ENCODE measurements at regions of chr2 and their contacts with region 1.

Region 1: GRCh38 chr2:177164584-177165052 is 48.0 kb upstream of the HNRNPA3 start:
- DNase-seq: peak; percentile 89
- H3K4me3 ChIP-seq: peak overlapping the region; percentile 11 to 41 (median 31)
- H3K27ac ChIP-seq: peak overlapping the region; percentile 83 to 90 (median 87)
- H3K4me1 ChIP-seq: peaks cover 0 to 40% (median 20%) of the 10 kb centered on the region in 4 donors
- H3K27me3 ChIP-seq: no peaks in the 10 kb centered on the region
- CTCF ChIP-seq: peak; percentile 100
- EP300 ChIP-seq: no peak
- POLR2A ChIP-seq: no peak

Region 2: GRCh38 chr2:177263451-177264208 is 99.0 kb after region 1 on chr2:
- in situ Hi-C with region 1: loop called in 1 of 4 experiments (anchors 10 kb)
- intact Hi-C with region 1: loop called (anchors 2 kb)
- DNase-seq: peak; percentile 99
- H3K4me3 ChIP-seq: peak overlapping the region; percentile 73 to 96 (median 86)
- H3K27ac ChIP-seq: peak overlapping the region; percentile 98 to 100 (median 98)
- H3K4me1 ChIP-seq: peaks cover 15 to 61% (median 49%) of the 10 kb centered on the region in 4 donors
- H3K27me3 ChIP-seq: no peaks in the 10 kb centered on the region
- CTCF ChIP-seq: peak; percentile 79 to 97 (median 87)
- EP300 ChIP-seq: peak; percentile 83
- POLR2A ChIP-seq: peak; percentile 85

Region 3: GRCh38 chr2:177419274-177419673 is 254.7 kb after region 1 on chr2:
- in situ Hi-C with region 1: loop called in 1 of 4 experiments (anchors 10 kb)
- intact Hi-C with region 1: loop called (anchors 10 kb)
- DNase-seq: no peak
- H3K4me3 ChIP-seq: no peak overlapping the region
- H3K27ac ChIP-seq: no peak overlapping the region
- H3K4me1 ChIP-seq: peaks cover 0 to 35% (median 9%) of the 10 kb centered on the region in 4 donors
- H3K27me3 ChIP-seq: no peaks in the 10 kb centered on the region
- CTCF ChIP-seq: no peak
- EP300 ChIP-seq: no peak
- POLR2A ChIP-seq: no peak

Region 4: GRCh38 chr2:177585234-177585863 is 420.7 kb after region 1 on chr2:
- in situ Hi-C with region 1: no loop called
- intact Hi-C with region 1: no loop called
- DNase-seq: no peak
- H3K4me3 ChIP-seq: no peak overlapping the region
- H3K27ac ChIP-seq: peak overlapping the region in 3 of 4 donors; percentile 8 to 60 (median 34)
- H3K4me1 ChIP-seq: peaks cover 0 to 13% (median 5%) of the 10 kb centered on the region in 4 donors
- H3K27me3 ChIP-seq: no peaks in the 10 kb centered on the region
- CTCF ChIP-seq: no peak
- EP300 ChIP-seq: no peak
- POLR2A ChIP-seq: no peak

Region 5: DNA sequence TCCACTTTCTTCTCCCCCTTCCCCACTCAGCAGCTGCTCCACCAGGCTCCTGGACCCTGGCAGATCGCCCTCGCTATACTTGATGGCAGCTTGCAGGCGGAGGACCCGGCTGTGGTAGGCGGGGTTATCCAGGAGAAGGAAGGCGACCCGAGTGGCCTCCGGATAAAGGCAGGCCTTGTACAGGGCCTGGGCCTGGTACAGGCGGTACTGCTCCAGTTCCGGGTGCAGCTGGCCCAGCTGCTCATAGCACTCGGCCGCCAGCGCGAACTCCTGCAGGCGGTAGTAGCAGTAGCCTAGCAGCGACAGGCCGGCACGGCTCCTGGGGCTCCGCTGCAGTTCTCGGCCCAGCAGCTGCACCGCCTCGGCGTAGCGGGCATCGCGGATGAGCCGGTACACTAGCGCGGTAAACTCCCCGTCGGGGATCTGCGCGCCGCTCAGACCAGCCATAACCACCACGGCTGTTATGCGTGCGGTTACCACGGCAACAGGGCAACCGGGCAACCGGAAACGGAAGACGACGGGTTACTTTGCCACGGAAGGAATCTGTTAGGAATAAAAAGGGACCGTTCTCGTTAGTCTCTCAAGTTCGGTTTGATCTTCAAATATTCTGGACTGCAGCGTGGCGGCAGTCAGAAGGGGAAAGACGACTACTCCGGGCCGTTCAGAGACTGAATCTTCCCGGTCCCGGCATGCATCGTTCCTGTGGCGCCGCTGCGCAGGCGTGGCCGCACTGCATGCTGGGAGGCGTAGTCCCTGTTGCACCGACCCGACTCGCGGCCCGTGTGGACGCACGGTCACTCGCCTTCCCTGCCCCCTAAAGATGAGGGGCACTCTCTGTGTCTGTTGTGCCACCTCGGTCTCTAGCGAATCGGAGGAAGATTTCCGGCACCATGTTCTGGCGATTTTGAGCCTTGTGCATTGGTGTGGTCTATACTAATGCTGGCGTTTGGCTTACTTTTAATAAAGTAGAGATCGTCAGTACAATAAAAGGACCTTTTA is 453.9 kb after region 1 on chr2:
- in situ Hi-C with region 1: loop called in 3 of 4 experiments (anchors 25 kb)
- intact Hi-C with region 1: no loop called
- DNase-seq: peak; percentile 92
- H3K4me3 ChIP-seq: peak overlapping the region; percentile 67 to 97 (median 75)
- H3K27ac ChIP-seq: peak overlapping the region; percentile 90 to 98 (median 91)
- H3K4me1 ChIP-seq: peaks cover 0 to 8% (median 5%) of the 10 kb centered on the region in 4 donors
- H3K27me3 ChIP-seq: no peaks in the 10 kb centered on the region
- CTCF ChIP-seq: peak in 1 of 5 experiments; percentile 9
- EP300 ChIP-seq: no peak
- POLR2A ChIP-seq: peak; percentile 45

Region 6: DNA sequence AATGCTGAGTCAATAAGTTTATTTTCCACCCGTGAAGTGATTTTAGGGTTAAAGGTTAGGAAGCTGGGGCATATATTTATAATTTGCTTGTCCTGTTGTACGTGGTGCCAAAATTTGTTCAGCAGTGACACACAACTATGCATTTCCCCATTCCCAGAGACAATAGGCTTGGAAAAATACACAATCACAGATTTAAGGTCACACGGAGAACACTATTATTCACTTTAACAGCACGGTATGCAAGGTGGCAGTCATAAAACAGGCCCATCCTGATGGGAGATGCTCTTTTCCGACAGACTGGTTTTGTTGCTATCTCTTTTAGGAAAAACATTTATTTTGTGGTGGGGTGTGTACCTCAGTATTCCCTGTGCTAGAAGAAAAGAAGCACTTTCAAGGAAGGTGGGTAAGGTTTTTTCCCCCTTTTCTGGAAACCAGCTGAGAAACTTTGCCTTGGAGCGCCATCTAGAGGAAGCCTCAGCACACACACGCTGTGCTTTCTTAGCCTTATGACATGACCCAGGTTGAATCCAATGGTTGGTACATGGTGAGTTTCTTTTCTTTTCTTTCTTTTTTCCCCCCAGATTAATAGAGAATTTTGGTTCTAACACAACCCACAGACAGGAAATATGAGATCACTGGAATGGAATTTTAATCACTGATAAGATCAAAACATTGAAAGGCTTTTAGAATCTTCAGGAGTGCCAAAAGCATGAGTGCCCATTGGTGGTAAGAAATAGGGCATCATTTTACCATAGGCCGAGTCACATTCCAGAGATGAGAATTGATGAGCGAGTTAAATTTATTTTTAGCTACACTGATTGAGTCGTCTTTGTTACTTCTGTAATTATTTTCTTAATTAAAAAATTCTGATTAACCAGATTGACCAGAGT is 560.0 kb after region 1 on chr2:
- in situ Hi-C with region 1: loop called in 2 of 4 experiments (anchors 25 kb)
- intact Hi-C with region 1: no loop called
- DNase-seq: peak; percentile 55
- H3K4me3 ChIP-seq: no peak overlapping the region
- H3K27ac ChIP-seq: no peak overlapping the region
- H3K4me1 ChIP-seq: peaks cover 0 to 4% (median 0%) of the 10 kb centered on the region in 4 donors
- H3K27me3 ChIP-seq: no peaks in the 10 kb centered on the region
- CTCF ChIP-seq: peak; percentile 85 to 89 (median 85)
- EP300 ChIP-seq: no peak
- POLR2A ChIP-seq: no peak

Region 7: DNA sequence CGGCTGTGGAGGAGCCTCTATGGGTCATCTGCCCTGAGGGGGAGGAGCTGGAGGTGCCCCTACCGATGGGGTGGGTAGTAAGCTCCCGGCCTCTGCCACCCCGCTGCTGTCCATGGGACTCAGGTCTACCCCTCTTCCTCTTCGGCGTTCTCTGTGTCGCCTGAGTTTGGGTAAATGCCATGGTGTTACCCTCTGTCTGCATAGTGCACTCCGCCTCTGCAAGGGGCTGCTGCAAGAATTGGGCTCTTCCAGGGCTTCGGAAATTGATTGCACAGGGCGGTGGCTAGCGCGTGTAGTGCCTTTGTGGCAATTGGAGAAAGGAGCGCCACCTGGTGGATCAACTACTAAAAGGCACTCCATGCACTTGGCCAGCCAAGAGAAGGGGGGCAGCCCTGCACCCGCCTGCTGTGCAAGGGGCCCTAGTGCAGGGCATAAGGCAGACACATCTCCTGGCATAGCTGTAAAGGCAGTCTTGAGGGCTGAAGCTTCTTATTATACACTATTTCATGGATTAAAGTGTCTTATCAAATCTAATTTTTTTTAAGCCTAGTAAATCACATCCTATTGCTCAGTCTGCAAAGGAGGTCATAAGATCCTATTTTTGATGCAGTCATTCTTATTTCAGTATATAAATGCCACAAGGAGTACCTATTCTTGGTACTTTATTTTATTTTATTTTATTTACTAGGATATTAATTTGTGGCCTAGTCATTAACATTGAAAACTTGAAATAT is 599.1 kb after region 1 on chr2:
- in situ Hi-C with region 1: loop called in 2 of 4 experiments (anchors 25 kb)
- intact Hi-C with region 1: no loop called
- DNase-seq: peak; percentile 78
- H3K4me3 ChIP-seq: no peak overlapping the region
- H3K27ac ChIP-seq: no peak overlapping the region
- H3K4me1 ChIP-seq: peaks cover 0 to 7% (median under 1%) of the 10 kb centered on the region in 4 donors
- H3K27me3 ChIP-seq: no peaks in the 10 kb centered on the region
- CTCF ChIP-seq: peak; percentile 64 to 84 (median 81)
- EP300 ChIP-seq: no peak
- POLR2A ChIP-seq: no peak

Measured in transverse colon (tissue), 4 donors.